Activated B cell treated with CpG ODN at 0.5 μM for 24 hours (primary cell): ENCODE measurements at regions of chr16 and their contacts with region 1.

Region 1: GRCh38 chr16:3857189-3858043 is 23.1 kb downstream of the CREBBP start:
- DNase-seq: no peak
- ATAC-seq: no peak
- H3K4me3 Mint-ChIP-seq: no peak overlapping the region
- H3K27ac Mint-ChIP-seq: peak overlapping the region; percentile 43
- H3K4me1 Mint-ChIP-seq: peaks cover 90% of the 10 kb centered on the region
- H3K27me3 Mint-ChIP-seq: no peaks in the 10 kb centered on the region
- CTCF ChIP-seq: no peak

Region 2: DNA sequence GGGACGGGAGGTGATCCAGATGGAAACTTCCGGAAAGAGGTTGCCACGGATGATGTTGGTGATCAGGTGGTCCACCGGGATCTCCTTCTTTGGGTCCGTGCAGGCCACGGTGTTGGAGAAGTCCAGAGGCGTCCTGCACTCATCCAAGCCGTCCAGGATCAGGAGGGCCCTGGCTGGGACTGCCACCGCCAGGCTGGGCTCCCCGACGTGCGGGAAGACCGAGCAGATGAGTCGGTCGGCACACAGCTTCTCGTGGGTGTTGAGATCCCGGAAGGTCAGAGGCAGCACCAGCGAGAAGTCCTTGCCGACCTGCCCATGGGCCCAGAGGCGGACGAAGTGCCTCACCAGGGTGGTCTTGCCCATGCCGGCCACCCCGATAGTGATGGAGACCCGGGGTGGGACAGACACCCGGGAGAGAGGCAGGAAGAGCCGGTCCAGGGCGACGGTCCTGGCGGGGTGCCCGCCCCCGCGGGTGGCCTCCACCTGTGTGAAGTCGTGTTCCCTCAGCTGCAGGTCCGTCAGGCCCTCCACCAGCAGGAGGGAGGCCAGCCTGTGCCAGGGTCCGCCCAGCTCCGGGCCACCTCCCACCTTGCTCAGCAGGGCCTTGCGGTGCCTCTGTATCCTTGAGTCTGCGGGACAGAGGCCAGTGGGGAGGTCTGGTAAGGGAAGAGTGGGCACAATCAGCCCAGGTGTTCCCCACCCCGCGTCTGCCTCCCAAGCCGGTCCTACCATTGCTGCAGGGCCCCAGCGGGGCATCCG is 293.1 kb before region 1 on chr16:
- CTCF ChIA-PET with region 1: no interaction called
- POLR2A ChIA-PET with region 1: no interaction called
- intact Hi-C with region 1: no loop called
- DNase-seq: no peak
- ATAC-seq: no peak
- H3K4me3 Mint-ChIP-seq: no peak overlapping the region
- H3K27ac Mint-ChIP-seq: no peak overlapping the region
- H3K4me1 Mint-ChIP-seq: no peaks in the 10 kb centered on the region
- H3K27me3 Mint-ChIP-seq: no peaks in the 10 kb centered on the region
- CTCF ChIP-seq: no peak

Region 3: GRCh38 chr16:3717235-3718018 is 140.0 kb before region 1 on chr16 and contains the start of gene TRAP1:
- CTCF ChIA-PET with region 1: no interaction called
- POLR2A ChIA-PET with region 1: no interaction called
- intact Hi-C with region 1: no loop called
- DNase-seq: peak; percentile 90
- ATAC-seq: peak; percentile 95
- H3K4me3 Mint-ChIP-seq: peak within 1 kb of the TSS; percentile 91
- H3K27ac Mint-ChIP-seq: peak within 1 kb of the TSS; percentile 85
- H3K4me1 Mint-ChIP-seq: peaks cover 20% of the 10 kb centered on the region
- H3K27me3 Mint-ChIP-seq: no peaks in the 10 kb centered on the region
- CTCF ChIP-seq: no peak
- total RNA-seq, gene TRAP1: 78.7 and 82.2 TPM in 2 replicates

Region 4: DNA sequence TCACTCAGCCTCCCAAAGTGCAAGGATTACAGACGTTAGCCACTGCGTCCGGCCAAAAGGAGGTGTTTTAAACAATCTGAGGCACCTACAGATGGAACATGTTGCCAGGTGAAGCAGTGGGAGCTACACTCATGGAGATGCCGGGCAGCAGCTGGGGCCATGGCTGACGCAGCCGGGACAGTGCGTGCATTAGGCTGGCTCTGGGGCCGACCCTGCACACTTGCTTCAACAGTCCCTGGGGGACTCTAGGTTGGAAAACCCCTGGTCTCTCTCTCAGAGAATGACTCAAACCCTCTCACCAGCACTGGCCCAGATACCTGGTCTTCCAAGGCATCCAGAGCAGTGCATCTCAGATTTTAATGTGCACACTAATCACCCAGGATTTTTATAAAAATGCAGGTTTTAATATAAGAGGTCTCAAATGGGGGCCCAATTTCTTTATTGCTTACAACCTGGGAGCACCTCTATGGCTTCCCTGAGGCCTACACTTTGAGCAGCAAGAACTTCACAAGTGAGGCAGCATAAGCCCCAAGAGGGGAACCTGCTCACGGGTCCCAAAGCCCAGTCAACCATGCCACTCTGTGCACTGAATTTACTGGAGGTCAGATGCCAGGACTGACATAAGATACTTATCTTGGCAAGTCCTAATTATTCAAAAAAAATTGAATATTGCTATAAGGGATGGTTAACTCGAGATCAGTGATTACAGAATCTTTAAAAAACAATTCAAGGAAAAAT is 69.3 kb before region 1 on chr16:
- CTCF ChIA-PET with region 1: no interaction called
- POLR2A ChIA-PET with region 1: no interaction called
- intact Hi-C with region 1: loop called (anchors 5 kb)
- DNase-seq: peak; percentile 36
- ATAC-seq: peak; percentile 97
- H3K4me3 Mint-ChIP-seq: peak overlapping the region; percentile 41
- H3K27ac Mint-ChIP-seq: peak overlapping the region; percentile 71
- H3K4me1 Mint-ChIP-seq: peaks cover 41% of the 10 kb centered on the region
- H3K27me3 Mint-ChIP-seq: no peaks in the 10 kb centered on the region
- CTCF ChIP-seq: no peak

Region 5: DNA sequence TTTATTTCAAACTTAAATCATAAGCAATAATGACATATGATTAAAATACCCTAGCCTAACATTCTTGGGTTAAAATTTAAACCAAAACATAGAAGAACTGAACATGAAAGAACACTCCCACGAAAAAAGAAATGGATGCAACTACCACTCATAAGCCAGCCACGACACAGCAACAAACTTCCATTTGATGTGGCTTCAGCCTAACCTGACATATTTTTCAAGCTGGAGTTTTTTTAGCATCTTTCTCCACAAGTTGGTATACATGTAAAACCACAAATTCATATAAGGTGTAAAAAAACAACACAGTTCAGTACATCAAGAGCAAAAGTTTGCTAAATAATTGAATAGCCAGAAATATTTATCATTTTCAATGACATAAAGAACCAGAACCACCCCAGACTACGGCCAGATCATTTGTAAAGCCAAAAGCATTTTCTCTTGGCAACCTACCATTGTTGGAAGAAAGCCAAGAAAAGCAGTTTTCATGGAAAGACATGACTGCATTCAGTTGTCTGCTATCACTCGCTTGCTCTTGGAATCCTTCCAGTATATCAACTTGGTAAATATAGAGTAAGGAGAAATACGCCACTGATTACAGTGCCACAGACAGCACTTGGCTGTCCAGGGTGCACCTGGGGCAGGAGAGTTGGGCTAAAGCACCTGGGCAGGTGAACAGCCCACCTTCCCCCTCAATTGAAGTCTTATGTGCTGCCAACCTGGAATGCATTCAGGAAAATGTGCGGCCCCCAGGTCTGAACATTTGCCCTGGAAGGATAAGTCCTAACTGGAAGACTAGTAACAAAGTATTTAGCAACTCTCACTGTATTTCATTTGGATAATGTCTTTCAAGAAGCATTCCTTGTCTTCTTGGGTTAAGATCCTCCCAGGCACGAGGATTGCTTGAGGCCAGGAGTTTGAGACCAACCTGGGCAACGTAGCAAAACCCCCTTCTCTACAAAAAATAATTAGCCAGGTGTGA is 37.4 kb before region 1 on chr16:
- CTCF ChIA-PET with region 1: no interaction called
- POLR2A ChIA-PET with region 1: no interaction called
- intact Hi-C with region 1: loop called (anchors 5 kb)
- DNase-seq: no peak
- ATAC-seq: no peak
- H3K4me3 Mint-ChIP-seq: no peak overlapping the region
- H3K27ac Mint-ChIP-seq: peak overlapping the region; percentile 19
- H3K4me1 Mint-ChIP-seq: peaks cover 93% of the 10 kb centered on the region
- H3K27me3 Mint-ChIP-seq: no peaks in the 10 kb centered on the region
- CTCF ChIP-seq: no peak

Region 6: DNA sequence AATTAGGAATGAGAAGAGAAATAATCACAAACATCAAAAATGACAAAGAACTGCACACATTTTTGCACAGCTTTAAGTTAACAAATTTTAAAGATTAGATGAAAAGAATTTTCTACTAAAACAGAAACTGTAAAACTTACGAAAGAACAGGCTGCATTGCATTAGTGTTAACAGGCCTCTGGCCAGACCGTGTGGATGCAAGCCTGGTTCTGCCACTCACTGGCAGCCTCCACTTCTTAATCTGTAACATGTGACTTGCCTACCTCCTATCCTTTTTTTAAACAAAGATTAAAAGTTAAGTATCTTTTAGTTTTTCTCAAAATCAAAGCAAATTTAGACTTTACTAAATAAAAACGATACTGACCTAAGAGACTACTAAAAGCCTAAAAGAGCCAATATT is 14.4 kb before region 1 on chr16:
- CTCF ChIA-PET with region 1: no interaction called
- POLR2A ChIA-PET with region 1: no interaction called
- intact Hi-C with region 1: loop called (anchors 2 kb)
- DNase-seq: no peak
- ATAC-seq: no peak
- H3K4me3 Mint-ChIP-seq: no peak overlapping the region
- H3K27ac Mint-ChIP-seq: no peak overlapping the region
- H3K4me1 Mint-ChIP-seq: peaks cover 57% of the 10 kb centered on the region
- H3K27me3 Mint-ChIP-seq: no peaks in the 10 kb centered on the region
- CTCF ChIP-seq: no peak